ENCODE measurements at regions of chr22 and their contacts with region 1.

Region 1: DNA sequence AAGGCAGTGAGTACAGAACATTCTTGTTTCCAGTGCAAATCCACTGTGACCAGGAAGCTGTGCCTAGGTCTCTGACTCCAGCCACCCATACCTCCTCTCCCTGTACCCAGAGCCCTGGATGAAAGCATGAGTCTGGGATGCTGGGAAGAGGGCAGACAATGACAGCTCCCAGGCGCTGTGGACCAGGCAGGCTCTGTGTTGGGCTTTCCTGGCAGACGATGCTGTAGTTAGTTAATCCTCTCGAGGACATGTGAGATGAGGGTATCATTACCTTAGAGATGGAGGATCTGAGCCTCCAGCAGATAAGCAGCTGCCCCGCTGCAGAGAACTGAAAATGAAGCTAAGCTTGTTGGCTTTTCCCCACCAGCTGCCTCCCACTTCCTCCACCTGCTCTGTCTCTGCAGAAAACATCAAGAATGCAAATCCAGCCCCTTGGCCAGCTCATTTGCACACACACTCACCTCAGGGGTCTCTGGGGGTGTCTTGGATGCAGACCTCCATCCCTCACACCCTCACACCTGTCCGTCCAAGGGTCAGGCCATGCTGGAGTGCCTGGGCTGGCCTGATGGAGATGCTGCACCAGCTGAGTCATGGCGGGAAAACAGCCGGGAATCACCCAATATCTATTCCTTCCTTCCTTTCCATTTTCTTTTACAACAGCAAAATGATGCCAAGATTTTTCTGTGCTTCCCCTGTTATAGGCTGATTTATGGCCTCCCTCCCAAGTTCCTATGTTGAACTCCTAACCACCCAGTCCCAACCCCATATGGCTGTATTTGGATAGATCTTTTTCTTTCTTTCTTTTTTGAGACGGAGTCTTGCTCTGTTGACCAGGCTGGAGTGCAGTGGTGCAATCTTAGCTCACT is 94.9 kb upstream of the SEPTIN5 start:
- DNase-seq: peak; percentile 92
- H3K4me3 ChIP-seq: peak overlapping the region; percentile 24
- H3K27ac ChIP-seq: peak overlapping the region; percentile 76
- H3K4me1 ChIP-seq: peaks cover 68% of the 10 kb centered on the region
- CTCF ChIP-seq: no peak

Region 2: GRCh38 chr22:19579880-19580279 is 39.5 kb before region 1 on chr22:
- CTCF ChIA-PET with region 1: no interaction called
- POLR2A ChIA-PET with region 1: no interaction called
- intact Hi-C with region 1: loop called (anchors 1 kb)
- DNase-seq: peak; percentile 57
- H3K4me3 ChIP-seq: no peak overlapping the region
- H3K27ac ChIP-seq: no peak overlapping the region
- H3K4me1 ChIP-seq: peaks cover 14% of the 10 kb centered on the region
- CTCF ChIP-seq: no peak

Region 3: DNA sequence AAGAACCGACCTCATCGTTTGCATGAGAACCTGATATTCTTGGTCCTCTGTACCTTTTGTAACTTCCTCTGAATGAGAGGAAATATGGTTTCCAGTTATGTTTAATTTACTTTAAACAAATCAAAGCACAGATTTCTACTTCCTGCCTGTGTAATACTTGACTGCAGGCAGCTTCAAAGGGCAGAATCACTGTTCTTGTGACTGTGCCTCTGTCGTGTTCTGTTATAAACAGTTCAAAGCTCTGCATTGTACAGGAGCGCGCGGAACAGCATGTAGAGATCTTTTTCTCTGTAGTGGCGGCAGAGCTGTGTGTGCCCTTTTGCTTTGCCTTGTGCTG is 22.0 kb before region 1 on chr22:
- CTCF ChIA-PET with region 1: no interaction called
- POLR2A ChIA-PET with region 1: interaction called, 6 read pairs
- intact Hi-C with region 1: loop called (anchors 1 kb)
- DNase-seq: peak; percentile 90
- H3K4me3 ChIP-seq: peak overlapping the region; percentile 4
- H3K27ac ChIP-seq: peak overlapping the region; percentile 84
- H3K4me1 ChIP-seq: peaks cover 27% of the 10 kb centered on the region
- CTCF ChIP-seq: no peak

Region 4: GRCh38 chr22:19631899-19632667 is 12.7 kb after region 1 on chr22:
- CTCF ChIA-PET with region 1: no interaction called
- POLR2A ChIA-PET with region 1: no interaction called
- intact Hi-C with region 1: no loop called
- DNase-seq: peak; percentile 33
- H3K4me3 ChIP-seq: no peak overlapping the region
- H3K27ac ChIP-seq: no peak overlapping the region
- H3K4me1 ChIP-seq: no peaks in the 10 kb centered on the region
- CTCF ChIP-seq: peak; percentile 60